ENCODE measurements at regions of chr14 and their contacts with region 1.

Region 1: GRCh38 chr14:29255692-29256091 is 489.1 kb downstream of the FOXG1 start:
- DNase-seq: no peak
- H3K4me3 ChIP-seq: no peak overlapping the region
- H3K27ac ChIP-seq: no peak overlapping the region
- H3K4me1 ChIP-seq: no peaks in the 10 kb centered on the region
- H3K27me3 ChIP-seq: no peaks in the 10 kb centered on the region
- CTCF ChIP-seq: no peak
- POLR2A ChIP-seq: no peak

Region 2: GRCh38 chr14:29301571-29301970 is 45.9 kb after region 1 on chr14:
- intact Hi-C with region 1: loop called (anchors 1 kb)
- DNase-seq: no peak
- H3K4me3 ChIP-seq: no peak overlapping the region
- H3K27ac ChIP-seq: no peak overlapping the region
- H3K4me1 ChIP-seq: no peaks in the 10 kb centered on the region
- H3K27me3 ChIP-seq: no peaks in the 10 kb centered on the region
- CTCF ChIP-seq: no peak
- POLR2A ChIP-seq: no peak

Region 3: DNA sequence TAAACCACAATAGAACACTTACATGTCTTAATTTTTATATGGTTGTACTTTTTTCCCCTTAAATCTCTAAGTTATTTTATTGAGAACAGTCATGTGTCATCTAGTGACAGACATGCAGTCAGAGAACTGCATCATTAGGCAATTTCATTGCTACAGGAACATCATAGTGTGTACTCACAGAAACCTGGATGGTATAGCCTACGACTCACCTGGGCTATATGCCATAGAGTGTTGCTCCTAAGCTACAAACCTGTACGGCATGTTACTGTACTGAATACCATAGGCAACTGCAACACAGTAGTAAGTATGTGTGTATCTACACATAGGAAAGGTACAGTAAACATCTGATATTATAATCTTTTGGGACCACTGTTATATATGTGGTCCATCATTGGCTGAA is 114.3 kb after region 1 on chr14:
- intact Hi-C with region 1: no loop called
- DNase-seq: no peak
- H3K4me3 ChIP-seq: no peak overlapping the region
- H3K27ac ChIP-seq: no peak overlapping the region
- H3K4me1 ChIP-seq: no peaks in the 10 kb centered on the region
- H3K27me3 ChIP-seq: no peaks in the 10 kb centered on the region
- CTCF ChIP-seq: no peak
- POLR2A ChIP-seq: no peak

Measured in vagina (tissue), 2 donors.